ENCODE measurements at regions of chr6 and their contacts with region 1.

Region 1: DNA sequence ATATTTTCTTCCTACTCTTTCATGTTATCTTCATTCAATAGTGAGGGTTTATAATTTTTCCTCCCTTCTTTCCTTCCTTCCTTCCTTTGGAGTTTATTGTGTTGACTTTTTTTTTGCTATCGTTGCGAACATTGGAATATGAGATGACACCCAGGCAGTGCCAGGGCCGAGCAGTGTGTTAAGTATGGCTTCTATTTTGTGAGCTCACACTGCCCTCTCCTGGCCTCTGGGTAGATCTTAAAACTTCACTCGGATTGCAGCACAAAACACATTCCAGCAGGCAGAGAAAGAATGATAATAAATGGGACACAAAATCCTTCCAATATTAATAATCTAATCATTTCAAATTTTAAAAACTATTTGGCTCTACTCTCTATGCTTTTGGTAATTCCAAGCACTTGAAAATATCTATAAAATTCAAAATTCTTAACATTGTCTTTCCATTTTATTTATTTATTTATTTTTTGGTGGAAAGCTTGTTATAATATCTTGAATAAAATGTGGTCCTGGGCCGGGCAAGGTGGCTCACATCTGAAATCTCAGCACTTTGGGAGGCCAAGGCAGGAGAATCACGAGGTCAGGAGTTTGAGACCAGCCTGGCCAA is 147.4 kb upstream of the OLIG3 start:
- DNase-seq: peak; percentile 37 to 75
- ATAC-seq: peak in 7 of 8 donors; percentile 83 to 94 (median 91)
- H3K4me3 ChIP-seq: no peak overlapping the region
- H3K27ac ChIP-seq: no peak overlapping the region
- H3K4me1 ChIP-seq: peaks cover 0 to 12% (median 4%) of the 10 kb centered on the region in 9 donors
- H3K27me3 ChIP-seq: no peaks in the 10 kb centered on the region
- CTCF ChIP-seq: peak; percentile 26 to 78 (median 67)

Region 2: GRCh38 chr6:136593748-136594490 is 1047.7 kb before region 1 on chr6:
- intact Hi-C with region 1: loop called in 1 of 10 experiments (anchors 10 kb)
- DNase-seq: no peak
- ATAC-seq: peak in 7 of 8 donors; percentile 29 to 72 (median 46)
- H3K4me3 ChIP-seq: no peak overlapping the region
- H3K27ac ChIP-seq: peak overlapping the region in 1 of 10 donors; percentile 82
- H3K4me1 ChIP-seq: peaks cover 0 to 30% (median 0%) of the 10 kb centered on the region in 9 donors
- H3K27me3 ChIP-seq: no peaks in the 10 kb centered on the region
- CTCF ChIP-seq: no peak

Region 3: GRCh38 chr6:137076277-137077068 is 565.1 kb before region 1 on chr6:
- intact Hi-C with region 1: loop called in 4 of 10 experiments (anchors 2 to 5 kb)
- DNase-seq: peak; percentile 54 to 69
- ATAC-seq: peak; percentile 83 to 100 (median 96)
- H3K4me3 ChIP-seq: no peak overlapping the region
- H3K27ac ChIP-seq: no peak overlapping the region
- H3K4me1 ChIP-seq: no peaks in the 10 kb centered on the region
- H3K27me3 ChIP-seq: peaks cover 0 to 5% (median 0%) of the 10 kb centered on the region in 7 donors
- CTCF ChIP-seq: peak; percentile 48 to 82 (median 74)

Region 4: DNA sequence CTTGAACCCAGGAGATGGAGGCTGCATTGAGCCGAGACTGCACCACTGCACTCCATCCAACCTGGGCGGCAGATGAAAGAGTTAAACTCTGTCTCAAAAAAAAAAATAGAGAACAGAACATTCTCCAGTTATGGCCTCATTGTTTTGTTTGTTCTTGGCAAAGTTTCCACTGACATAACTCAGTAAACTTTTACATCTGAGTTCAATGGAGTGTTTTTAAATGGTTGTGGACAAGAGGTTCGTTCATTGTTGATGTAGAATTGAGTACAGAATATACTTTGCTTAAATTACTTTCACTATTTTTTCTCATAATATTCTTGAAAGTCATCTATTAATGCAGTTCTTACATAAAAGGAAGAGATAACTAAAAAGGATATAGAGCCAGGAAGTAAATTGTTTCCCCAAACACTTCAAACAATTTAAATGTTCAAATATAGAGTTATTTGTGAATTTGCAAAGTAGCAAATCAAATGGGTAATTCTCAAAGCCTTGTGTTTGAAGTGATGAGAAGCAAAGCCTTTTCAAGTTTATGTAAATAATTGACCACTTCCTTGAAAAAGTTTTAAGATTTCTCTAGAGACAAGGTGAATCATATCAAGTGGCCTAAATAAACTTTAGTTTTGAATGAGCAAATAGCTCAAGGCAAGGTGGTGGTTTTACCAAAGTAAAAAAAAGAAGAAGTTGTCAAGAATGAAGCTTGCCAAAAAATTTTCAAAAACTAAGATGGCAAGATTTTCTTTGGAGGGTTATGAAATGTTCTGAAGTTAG is 380.0 kb before region 1 on chr6:
- intact Hi-C with region 1: loop called in 1 of 10 experiments (anchors 5 kb)
- DNase-seq: no peak
- ATAC-seq: peak in 6 of 8 donors; percentile 39 to 85 (median 62)
- H3K4me3 ChIP-seq: no peak overlapping the region
- H3K27ac ChIP-seq: peak overlapping the region; percentile 0 to 71 (median 49)
- H3K4me1 ChIP-seq: peaks cover 0 to 44% (median 18%) of the 10 kb centered on the region in 9 donors
- H3K27me3 ChIP-seq: no peaks in the 10 kb centered on the region
- CTCF ChIP-seq: no peak

Region 5: GRCh38 chr6:137277971-137278637 is 363.5 kb before region 1 on chr6:
- intact Hi-C with region 1: loop called in 6 of 10 experiments (anchors 5 to 10 kb)
- DNase-seq: no peak
- ATAC-seq: no peak
- H3K4me3 ChIP-seq: no peak overlapping the region
- H3K27ac ChIP-seq: no peak overlapping the region
- H3K4me1 ChIP-seq: peaks cover 0 to 5% (median 0%) of the 10 kb centered on the region in 9 donors
- H3K27me3 ChIP-seq: no peaks in the 10 kb centered on the region
- CTCF ChIP-seq: no peak

Region 6: GRCh38 chr6:137313928-137314855 is 327.4 kb before region 1 on chr6:
- intact Hi-C with region 1: loop called in 1 of 10 experiments (anchors 5 kb)
- DNase-seq: peak; percentile 69 to 74
- ATAC-seq: peak; percentile 79 to 96 (median 91)
- H3K4me3 ChIP-seq: peak overlapping the region in 5 of 10 donors; percentile 2 to 35 (median 20)
- H3K27ac ChIP-seq: peak overlapping the region in 1 of 10 donors; percentile 10
- H3K4me1 ChIP-seq: peaks cover 0 to 27% (median 13%) of the 10 kb centered on the region in 9 donors
- H3K27me3 ChIP-seq: no peaks in the 10 kb centered on the region
- CTCF ChIP-seq: peak; percentile 65 to 86 (median 81)

Region 7: DNA sequence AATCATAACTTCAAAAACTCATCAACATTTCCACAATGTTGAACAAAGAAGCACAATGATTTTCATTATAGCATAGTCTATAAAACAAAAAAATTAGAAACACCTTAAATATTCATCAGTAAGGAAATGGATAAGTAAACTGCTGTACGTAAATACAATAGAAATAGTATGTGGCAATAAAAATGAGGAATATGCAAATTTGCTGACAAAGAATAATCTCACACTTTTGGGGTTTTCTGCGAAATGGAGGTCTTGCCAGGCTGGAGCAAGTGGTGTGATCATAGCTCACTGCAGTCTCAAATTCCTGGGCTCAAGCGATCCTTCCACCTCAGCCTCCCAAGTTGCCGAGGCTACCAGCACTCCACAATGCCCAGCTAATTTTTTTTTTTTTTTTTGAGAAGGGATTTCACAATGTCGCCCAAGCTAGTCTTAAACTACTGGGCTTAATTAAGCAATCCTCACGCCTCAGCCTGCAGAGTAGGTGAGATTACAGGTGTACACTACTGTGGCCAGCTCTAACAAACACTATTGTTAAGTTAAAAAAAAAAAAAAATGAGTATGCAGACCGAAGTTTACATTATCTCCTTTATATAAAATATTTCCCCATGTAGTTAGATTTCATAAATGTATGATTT is 677.3 kb after region 1 on chr6:
- intact Hi-C with region 1: no loop called
- DNase-seq: no peak
- ATAC-seq: no peak
- H3K4me3 ChIP-seq: no peak overlapping the region
- H3K27ac ChIP-seq: no peak overlapping the region
- H3K4me1 ChIP-seq: no peaks in the 10 kb centered on the region
- H3K27me3 ChIP-seq: peaks cover 0 to 5% (median 0%) of the 10 kb centered on the region in 7 donors
- CTCF ChIP-seq: no peak